Activated T-helper 1 cell treated with anti-CD3 and anti-CD28 coated beads, Interleukin-12 subunit alpha, Interleukin-12 subunit beta, Interleukin-2, Interleukin-4 antibody, amounts not matched to agents 30 ng/mL and 10 ng/mL and 1 ng/mL, durations not matched to agents 14 hours and 24 hours and 36 hours (primary cell): ENCODE measurements at regions of chr6 and their contacts with region 1.

Region 1: DNA sequence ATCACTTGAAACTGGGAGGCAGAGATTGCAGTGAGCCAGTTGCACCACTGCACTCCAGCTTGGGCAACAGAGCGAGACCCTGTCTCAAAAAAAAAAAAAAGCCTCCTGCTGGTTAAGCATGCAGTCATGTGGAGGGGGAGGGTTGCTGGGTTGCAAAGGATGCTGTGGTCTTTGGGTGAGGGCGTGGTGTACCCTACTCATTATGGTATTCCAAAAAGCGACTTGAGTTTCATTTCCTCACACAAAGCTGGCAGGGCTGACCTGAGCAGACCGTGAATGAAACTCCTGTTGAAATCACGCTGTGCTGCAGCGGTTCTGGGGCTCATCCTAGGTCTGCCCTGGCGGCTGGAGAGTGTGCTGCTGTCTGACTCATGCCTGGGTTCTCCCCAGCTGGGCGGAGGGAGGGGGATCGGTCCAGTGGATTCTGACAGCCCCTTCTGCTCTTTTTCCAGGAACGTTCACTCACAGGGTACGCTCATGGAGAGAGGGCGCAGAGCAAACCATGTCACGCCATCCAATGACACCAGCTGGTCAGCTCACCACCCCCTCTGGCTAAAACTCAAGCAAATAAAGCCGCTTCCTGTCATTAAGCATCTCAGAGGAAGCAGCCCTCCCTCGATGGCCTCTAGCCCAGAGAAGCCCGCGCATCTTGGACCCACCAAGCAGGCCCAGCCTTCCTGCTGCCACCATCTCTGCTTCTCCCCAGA is 166.2 kb downstream of the SCML4 start:
- DNase-seq: peak; percentile 54
- H3K4me3 Mint-ChIP-seq: peak overlapping the region; percentile 48
- H3K27ac Mint-ChIP-seq: no peak overlapping the region
- H3K4me1 Mint-ChIP-seq: peaks cover 35% of the 10 kb centered on the region
- H3K27me3 Mint-ChIP-seq: peaks cover 14% of the 10 kb centered on the region

Region 2: GRCh38 chr6:107154131-107154800 is 503.6 kb before region 1 on chr6:
- intact Hi-C with region 1: no loop called
- DNase-seq: no peak
- H3K4me3 Mint-ChIP-seq: no peak overlapping the region
- H3K27ac Mint-ChIP-seq: no peak overlapping the region
- H3K4me1 Mint-ChIP-seq: no peaks in the 10 kb centered on the region
- H3K27me3 Mint-ChIP-seq: no peaks in the 10 kb centered on the region

Region 3: GRCh38 chr6:107318100-107318736 is 339.7 kb before region 1 on chr6:
- intact Hi-C with region 1: loop called (anchors 10 kb)
- DNase-seq: no peak
- H3K4me3 Mint-ChIP-seq: no peak overlapping the region
- H3K27ac Mint-ChIP-seq: no peak overlapping the region
- H3K4me1 Mint-ChIP-seq: peaks cover 14% of the 10 kb centered on the region
- H3K27me3 Mint-ChIP-seq: no peaks in the 10 kb centered on the region